Activated naive CD4-positive, alpha-beta T cell treated with anti-CD3 and anti-CD28 coated beads, Interleukin-2, amount 10 ng/mL, durations not matched to agents 7 days and 5 days (primary cell): ENCODE measurements at regions of chr1 and their contacts with region 1.

Region 1: DNA sequence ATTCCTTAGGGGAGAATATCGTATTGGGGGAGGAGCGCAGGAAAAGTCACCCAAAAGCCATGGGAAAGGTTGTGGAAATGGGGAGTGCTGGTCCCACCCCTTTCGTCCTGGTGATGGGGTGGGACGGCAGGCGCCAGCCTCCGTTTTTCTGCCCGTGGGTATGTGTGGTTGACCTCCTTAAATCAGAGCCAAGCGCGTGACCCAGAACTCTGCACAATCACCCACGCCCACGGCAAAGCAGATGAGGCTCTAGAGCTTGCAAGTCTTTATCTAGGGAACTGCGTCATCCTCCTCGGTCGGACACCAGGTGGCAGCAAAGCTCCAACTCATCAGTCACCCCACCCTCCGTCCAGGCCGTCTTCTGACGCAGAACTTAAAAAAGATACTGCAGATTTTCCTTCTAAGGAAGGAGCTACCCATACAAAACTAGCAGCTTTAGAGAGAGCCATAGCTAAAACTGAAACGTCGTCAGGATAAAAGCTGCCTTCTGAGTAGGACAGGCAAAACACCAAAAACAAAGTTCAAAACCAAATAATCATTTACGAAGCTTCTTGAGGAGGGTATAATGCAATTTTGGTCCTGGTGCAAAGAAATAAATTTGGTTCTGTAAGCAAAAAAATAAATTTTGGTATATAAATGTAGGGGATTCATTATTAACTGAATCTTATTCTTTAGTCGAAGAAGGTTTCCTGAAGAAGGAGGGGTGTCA is 62.0 kb downstream of the TBX19 start:
- DNase-seq: peak; percentile 91
- H3K4me3 Mint-ChIP-seq: no peak overlapping the region
- H3K27ac Mint-ChIP-seq: peak overlapping the region; percentile 64
- H3K4me1 Mint-ChIP-seq: peaks cover 27% of the 10 kb centered on the region
- H3K27me3 Mint-ChIP-seq: peaks cover 8% of the 10 kb centered on the region

Region 2: GRCh38 chr1:167964646-167965045 is 378.1 kb before region 1 on chr1:
- CTCF ChIA-PET with region 1: no interaction called
- DNase-seq: no peak
- H3K4me3 Mint-ChIP-seq: no peak overlapping the region
- H3K27ac Mint-ChIP-seq: no peak overlapping the region
- H3K4me1 Mint-ChIP-seq: no peaks in the 10 kb centered on the region
- H3K27me3 Mint-ChIP-seq: no peaks in the 10 kb centered on the region

Region 3: DNA sequence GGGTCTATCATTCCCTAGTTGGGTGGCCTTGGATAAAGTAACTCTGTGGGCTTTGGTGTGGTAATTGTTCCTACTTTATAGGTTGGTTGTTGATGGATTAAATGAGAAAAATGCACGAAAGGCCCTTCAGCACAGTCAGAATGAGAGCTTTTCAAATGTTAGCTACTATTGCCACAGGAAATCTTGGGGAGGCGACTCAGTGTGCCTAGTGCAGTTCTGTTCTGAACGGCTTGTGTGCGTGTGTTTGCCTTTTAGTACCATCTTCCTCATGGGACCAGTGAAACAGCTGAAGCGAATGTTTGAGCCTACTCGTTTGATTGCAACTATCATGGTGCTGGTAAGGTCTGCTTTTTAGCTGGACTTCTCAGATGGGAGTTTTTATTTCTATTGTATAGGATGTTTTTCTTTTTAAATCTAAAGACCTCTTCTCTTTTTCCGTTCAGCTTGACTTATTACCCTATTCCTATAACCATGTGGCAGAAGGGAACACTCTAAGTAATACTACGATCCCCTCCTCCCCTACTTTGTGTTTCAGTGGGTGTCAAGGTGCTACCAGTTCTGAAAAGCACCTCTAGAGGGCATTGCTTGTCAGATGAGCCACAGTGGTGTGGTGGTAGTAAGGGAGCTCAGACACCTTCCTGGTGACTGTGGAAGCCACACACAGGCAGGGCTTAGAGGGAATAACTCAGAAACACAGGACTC is 107.7 kb before region 1 on chr1:
- CTCF ChIA-PET with region 1: interaction called, 45 read pairs
- DNase-seq: peak; percentile 48
- H3K4me3 Mint-ChIP-seq: no peak overlapping the region
- H3K27ac Mint-ChIP-seq: no peak overlapping the region
- H3K4me1 Mint-ChIP-seq: peaks cover 53% of the 10 kb centered on the region
- H3K27me3 Mint-ChIP-seq: no peaks in the 10 kb centered on the region

Region 4: GRCh38 chr1:168401341-168401740 is 58.6 kb after region 1 on chr1:
- CTCF ChIA-PET with region 1: interaction called, 10 read pairs
- DNase-seq: no peak
- H3K4me3 Mint-ChIP-seq: no peak overlapping the region
- H3K27ac Mint-ChIP-seq: no peak overlapping the region
- H3K4me1 Mint-ChIP-seq: peaks cover 4% of the 10 kb centered on the region
- H3K27me3 Mint-ChIP-seq: peaks cover 23% of the 10 kb centered on the region

Region 5: GRCh38 chr1:168428063-168428731 is 85.5 kb after region 1 on chr1:
- CTCF ChIA-PET with region 1: interaction called, 132 read pairs
- DNase-seq: no peak
- H3K4me3 Mint-ChIP-seq: no peak overlapping the region
- H3K27ac Mint-ChIP-seq: no peak overlapping the region
- H3K4me1 Mint-ChIP-seq: peaks cover 4% of the 10 kb centered on the region
- H3K27me3 Mint-ChIP-seq: peaks cover 27% of the 10 kb centered on the region

Region 6: GRCh38 chr1:168490306-168490705 is 147.6 kb after region 1 on chr1:
- CTCF ChIA-PET with region 1: no interaction called
- DNase-seq: no peak
- H3K4me3 Mint-ChIP-seq: no peak overlapping the region
- H3K27ac Mint-ChIP-seq: no peak overlapping the region
- H3K4me1 Mint-ChIP-seq: peaks cover 16% of the 10 kb centered on the region
- H3K27me3 Mint-ChIP-seq: peaks cover 4% of the 10 kb centered on the region

Region 7: GRCh38 chr1:168603501-168604110 is 260.9 kb after region 1 on chr1:
- CTCF ChIA-PET with region 1: interaction called, 29 read pairs
- DNase-seq: peak; percentile 82
- H3K4me3 Mint-ChIP-seq: no peak overlapping the region
- H3K27ac Mint-ChIP-seq: no peak overlapping the region
- H3K4me1 Mint-ChIP-seq: no peaks in the 10 kb centered on the region
- H3K27me3 Mint-ChIP-seq: peaks cover 12% of the 10 kb centered on the region

Region 8: GRCh38 chr1:168689726-168690602 is 347.2 kb after region 1 on chr1:
- CTCF ChIA-PET with region 1: no interaction called
- DNase-seq: no peak
- H3K4me3 Mint-ChIP-seq: no peak overlapping the region
- H3K27ac Mint-ChIP-seq: no peak overlapping the region
- H3K4me1 Mint-ChIP-seq: no peaks in the 10 kb centered on the region
- H3K27me3 Mint-ChIP-seq: peaks cover 10% of the 10 kb centered on the region

Region 9: GRCh38 chr1:169348383-169349036 is 1005.8 kb after region 1 on chr1:
- CTCF ChIA-PET with region 1: interaction called, 28 read pairs
- DNase-seq: no peak
- H3K4me3 Mint-ChIP-seq: no peak overlapping the region
- H3K27ac Mint-ChIP-seq: no peak overlapping the region
- H3K4me1 Mint-ChIP-seq: peaks cover 2% of the 10 kb centered on the region
- H3K27me3 Mint-ChIP-seq: peaks cover 4% of the 10 kb centered on the region